ENCODE measurements at regions of chr5 and their contacts with region 1.

Region 1: GRCh38 chr5:172479044-172479783 is 24.9 kb upstream of the SH3PXD2B start:
- DNase-seq: peak; percentile 62 to 83
- H3K4me3 ChIP-seq: no peak overlapping the region
- H3K27ac ChIP-seq: peak overlapping the region in 1 of 2 donors; percentile 53
- H3K4me1 ChIP-seq: no peaks in the 10 kb centered on the region
- H3K27me3 ChIP-seq: no peaks in the 10 kb centered on the region
- CTCF ChIP-seq: peak; percentile 81 to 98 (median 91)
- POLR2A ChIP-seq: no peak

Region 2: DNA sequence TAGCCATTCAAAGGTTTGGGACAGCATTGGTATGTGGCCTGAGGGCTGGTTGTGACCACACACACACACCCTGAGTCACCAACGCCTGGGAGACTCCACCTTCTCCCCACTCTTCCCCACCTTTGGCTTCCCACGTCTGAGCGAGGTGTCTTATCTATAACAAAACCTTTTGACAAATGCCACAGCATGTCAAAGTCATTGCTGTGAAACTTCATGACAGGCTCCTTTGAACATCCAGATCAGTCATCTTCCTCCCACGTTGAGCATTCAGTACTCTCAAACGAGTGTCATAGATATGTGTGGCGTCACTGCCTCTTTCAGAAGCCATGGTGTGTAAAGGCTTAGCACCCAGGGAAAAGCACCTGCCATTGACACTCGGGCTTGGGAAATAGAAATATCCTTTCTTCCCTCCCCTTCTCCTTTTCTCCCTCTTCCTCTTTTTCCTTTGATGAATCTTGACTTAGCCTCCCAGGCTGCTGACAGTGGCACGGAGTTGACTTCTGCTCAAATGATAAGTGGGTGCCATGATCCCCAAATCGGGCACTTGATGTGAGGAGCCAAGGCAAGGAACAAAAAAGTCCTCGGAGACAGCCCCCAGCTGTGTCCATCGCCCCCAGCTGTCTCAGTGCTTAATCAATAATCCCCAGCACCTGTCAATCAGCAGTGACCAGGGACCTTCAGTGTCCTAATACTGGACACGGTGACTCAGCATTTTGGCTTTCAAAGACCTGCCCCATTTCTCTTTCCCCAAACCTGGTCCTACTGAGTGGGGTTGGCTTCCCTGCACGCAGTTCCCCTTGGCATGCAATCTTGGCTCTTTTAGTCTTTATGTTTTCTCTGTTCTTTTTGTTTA is 944.9 kb before region 1 on chr5:
- intact Hi-C with region 1: no loop called
- DNase-seq: no peak
- H3K4me3 ChIP-seq: no peak overlapping the region
- H3K27ac ChIP-seq: no peak overlapping the region
- H3K4me1 ChIP-seq: no peaks in the 10 kb centered on the region
- H3K27me3 ChIP-seq: no peaks in the 10 kb centered on the region
- CTCF ChIP-seq: no peak
- POLR2A ChIP-seq: no peak

Region 3: GRCh38 chr5:172800088-172800551 is 320.9 kb after region 1 on chr5:
- intact Hi-C with region 1: loop called (anchors 5 kb)
- DNase-seq: no peak
- H3K4me3 ChIP-seq: no peak overlapping the region
- H3K27ac ChIP-seq: peak overlapping the region in 1 of 2 donors; percentile 60
- H3K4me1 ChIP-seq: no peaks in the 10 kb centered on the region
- H3K27me3 ChIP-seq: no peaks in the 10 kb centered on the region
- CTCF ChIP-seq: no peak
- POLR2A ChIP-seq: no peak

Measured in breast epithelium (tissue), 4 donors.